ENCODE measurements at regions of chr11 and their contacts with region 1.

Region 1: DNA sequence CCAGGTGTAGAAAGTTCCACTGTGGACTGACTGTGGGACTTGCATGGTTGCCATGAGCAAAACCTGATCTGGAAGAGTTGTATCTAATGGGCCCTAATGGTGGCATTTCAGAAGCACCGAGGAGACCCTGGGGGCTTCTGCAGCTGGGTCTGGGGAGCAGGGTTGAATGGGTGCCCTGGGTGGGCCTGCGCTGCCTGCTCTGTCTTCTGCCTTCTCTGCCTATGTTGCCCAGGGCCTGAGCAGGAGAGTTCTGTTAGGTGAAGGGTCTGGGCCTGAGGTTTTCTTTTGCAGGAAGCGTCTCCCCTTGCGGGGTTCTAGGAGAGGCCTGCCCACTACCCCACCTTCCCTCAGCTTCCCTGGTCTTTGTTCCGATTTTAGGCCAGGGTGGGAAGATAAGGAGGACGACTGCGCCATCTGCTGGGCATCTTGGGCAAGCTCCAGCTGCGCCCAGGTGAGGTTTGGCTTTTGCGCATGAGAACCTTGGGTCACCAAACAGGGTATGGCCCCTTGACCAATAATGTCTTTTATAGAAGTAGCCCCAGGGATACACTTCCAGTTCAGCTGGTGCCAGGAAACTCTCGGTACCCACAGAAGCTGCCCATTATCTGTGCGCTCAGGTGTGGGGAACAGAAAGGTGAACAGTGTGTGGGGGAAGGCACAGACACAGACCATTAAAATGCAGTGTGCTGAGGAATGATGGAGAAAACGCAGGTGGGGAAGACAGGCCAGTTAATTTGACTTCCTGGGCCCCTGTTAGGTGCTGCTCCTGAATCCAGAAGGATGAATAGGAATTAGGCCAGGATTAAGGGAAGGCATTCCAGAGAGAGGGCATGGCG is 23.2 kb downstream of the COMMD9 start:
- DNase-seq: peak; percentile 29
- H3K4me3 ChIP-seq: no peak overlapping the region
- H3K27ac ChIP-seq: no peak overlapping the region
- H3K4me1 ChIP-seq: no peaks in the 10 kb centered on the region
- H3K27me3 ChIP-seq: no peaks in the 10 kb centered on the region
- CTCF ChIP-seq: peak; percentile 85 to 91

Region 2: DNA sequence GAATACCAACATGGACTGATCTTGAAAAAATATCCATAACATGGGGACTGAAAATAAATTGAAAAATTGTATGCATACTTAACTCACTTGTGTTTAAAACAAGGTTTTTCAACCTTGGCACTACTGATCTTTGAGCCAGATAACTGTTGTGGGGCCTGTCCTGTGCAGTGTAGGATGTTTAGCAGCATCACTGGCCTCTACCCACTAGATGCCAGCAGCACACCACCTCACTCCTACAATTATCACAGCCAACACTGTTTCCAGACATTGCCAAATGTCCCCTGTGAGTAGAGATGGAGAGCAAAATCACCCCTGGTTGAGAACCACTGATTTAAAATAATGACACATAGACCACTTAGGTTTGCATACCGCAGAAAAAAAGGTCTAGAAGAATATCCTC is 801.7 kb before region 1 on chr11:
- CTCF ChIA-PET with region 1: no interaction called
- dilution Hi-C with region 1: no loop called
- in situ Hi-C with region 1: no loop called
- intact Hi-C with region 1: loop called (anchors 5 kb)
- DNase-seq: peak; percentile 12
- H3K4me3 ChIP-seq: no peak overlapping the region
- H3K27ac ChIP-seq: no peak overlapping the region
- H3K4me1 ChIP-seq: no peaks in the 10 kb centered on the region
- H3K27me3 ChIP-seq: no peaks in the 10 kb centered on the region
- CTCF ChIP-seq: peak in 1 of 2 donors; percentile 47

Region 3: DNA sequence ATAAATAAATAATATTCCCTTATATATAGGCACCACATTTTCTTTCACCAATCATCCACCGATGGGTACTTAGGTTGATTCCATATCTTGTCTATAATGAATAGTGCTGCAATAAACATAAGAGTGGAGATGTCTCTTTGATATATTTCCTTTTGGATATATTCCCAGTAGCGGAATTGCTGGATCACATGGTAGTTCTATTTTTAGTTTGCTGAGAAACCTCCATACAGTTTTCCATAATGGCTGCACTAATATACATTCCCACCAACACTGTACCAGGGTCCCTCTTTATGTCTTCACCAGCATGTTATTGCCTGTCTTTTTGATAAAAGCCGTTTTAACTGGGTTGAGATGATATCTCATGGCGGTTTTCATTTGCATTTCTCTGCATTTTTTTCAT is 764.2 kb before region 1 on chr11:
- CTCF ChIA-PET with region 1: no interaction called
- dilution Hi-C with region 1: no loop called
- in situ Hi-C with region 1: loop called (anchors 25 kb)
- intact Hi-C with region 1: loop called (anchors 5 kb)
- DNase-seq: no peak
- H3K4me3 ChIP-seq: no peak overlapping the region
- H3K27ac ChIP-seq: no peak overlapping the region
- H3K4me1 ChIP-seq: no peaks in the 10 kb centered on the region
- H3K27me3 ChIP-seq: no peaks in the 10 kb centered on the region
- CTCF ChIP-seq: no peak

Region 4: DNA sequence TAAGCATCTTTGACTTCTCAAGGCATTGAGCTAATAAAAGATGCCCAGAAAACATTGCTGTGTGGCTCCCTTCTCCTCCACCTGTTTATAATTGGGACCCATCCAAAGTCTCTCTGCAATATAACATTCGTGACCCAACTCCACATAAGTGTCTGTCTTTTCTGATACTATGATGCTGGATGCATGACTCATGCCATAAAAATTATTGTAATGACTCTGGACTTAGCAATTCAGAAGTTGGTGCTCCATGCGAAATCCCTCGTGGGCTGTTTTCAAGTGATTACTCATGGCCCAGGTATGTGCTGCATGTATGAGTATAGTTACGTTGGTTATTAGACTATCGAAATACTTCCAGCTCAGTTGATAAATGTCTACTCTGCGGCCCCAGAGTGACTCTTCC is 636.1 kb before region 1 on chr11:
- CTCF ChIA-PET with region 1: no interaction called
- dilution Hi-C with region 1: loop called (anchors 25 kb)
- in situ Hi-C with region 1: no loop called
- intact Hi-C with region 1: no loop called
- DNase-seq: peak; percentile 97
- H3K4me3 ChIP-seq: no peak overlapping the region
- H3K27ac ChIP-seq: peak overlapping the region; percentile 53
- H3K4me1 ChIP-seq: peaks cover 17% of the 10 kb centered on the region
- H3K27me3 ChIP-seq: no peaks in the 10 kb centered on the region
- CTCF ChIP-seq: no peak

Region 5: GRCh38 chr11:35815556-35816315 is 450.3 kb before region 1 on chr11:
- CTCF ChIA-PET with region 1: no interaction called
- dilution Hi-C with region 1: no loop called
- in situ Hi-C with region 1: loop called (anchors 10 kb)
- intact Hi-C with region 1: no loop called
- DNase-seq: no peak
- H3K4me3 ChIP-seq: no peak overlapping the region
- H3K27ac ChIP-seq: no peak overlapping the region
- H3K4me1 ChIP-seq: peaks cover 9% of the 10 kb centered on the region
- H3K27me3 ChIP-seq: no peaks in the 10 kb centered on the region
- CTCF ChIP-seq: no peak

Region 6: DNA sequence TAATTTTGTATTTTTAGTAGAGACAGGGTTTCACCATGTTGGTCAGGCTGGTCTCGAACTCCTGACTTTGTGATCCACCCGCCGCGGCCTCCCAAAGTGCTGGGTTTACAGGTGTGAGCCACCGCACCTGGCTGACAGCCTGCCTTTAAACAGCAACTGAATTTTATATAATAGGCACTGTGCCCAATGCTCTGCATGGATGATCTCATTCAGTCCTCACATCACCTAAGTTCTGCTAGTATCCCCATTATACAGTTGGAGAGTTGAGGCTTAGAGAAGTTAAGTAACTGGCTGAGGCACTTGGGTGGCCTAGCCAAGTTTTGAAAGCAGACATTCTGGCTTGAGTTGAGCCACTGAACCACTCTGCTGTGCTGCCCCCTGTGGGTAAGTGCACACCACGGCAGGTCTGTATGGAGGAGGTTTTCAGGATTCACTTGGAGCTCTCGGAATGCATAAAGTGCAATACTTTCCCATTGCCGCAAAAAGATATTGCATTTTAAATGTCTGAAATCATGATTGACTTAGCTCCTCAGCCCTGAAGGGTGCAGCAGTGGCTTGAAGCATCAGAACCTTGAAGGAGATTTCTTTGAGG is 209.8 kb before region 1 on chr11:
- CTCF ChIA-PET with region 1: no interaction called
- dilution Hi-C with region 1: no loop called
- in situ Hi-C with region 1: loop called in 1 of 2 experiments (anchors 25 kb)
- intact Hi-C with region 1: no loop called
- DNase-seq: peak; percentile 24
- H3K4me3 ChIP-seq: no peak overlapping the region
- H3K27ac ChIP-seq: no peak overlapping the region
- H3K4me1 ChIP-seq: no peaks in the 10 kb centered on the region
- H3K27me3 ChIP-seq: no peaks in the 10 kb centered on the region
- CTCF ChIP-seq: peak; percentile 64 to 78

Region 7: DNA sequence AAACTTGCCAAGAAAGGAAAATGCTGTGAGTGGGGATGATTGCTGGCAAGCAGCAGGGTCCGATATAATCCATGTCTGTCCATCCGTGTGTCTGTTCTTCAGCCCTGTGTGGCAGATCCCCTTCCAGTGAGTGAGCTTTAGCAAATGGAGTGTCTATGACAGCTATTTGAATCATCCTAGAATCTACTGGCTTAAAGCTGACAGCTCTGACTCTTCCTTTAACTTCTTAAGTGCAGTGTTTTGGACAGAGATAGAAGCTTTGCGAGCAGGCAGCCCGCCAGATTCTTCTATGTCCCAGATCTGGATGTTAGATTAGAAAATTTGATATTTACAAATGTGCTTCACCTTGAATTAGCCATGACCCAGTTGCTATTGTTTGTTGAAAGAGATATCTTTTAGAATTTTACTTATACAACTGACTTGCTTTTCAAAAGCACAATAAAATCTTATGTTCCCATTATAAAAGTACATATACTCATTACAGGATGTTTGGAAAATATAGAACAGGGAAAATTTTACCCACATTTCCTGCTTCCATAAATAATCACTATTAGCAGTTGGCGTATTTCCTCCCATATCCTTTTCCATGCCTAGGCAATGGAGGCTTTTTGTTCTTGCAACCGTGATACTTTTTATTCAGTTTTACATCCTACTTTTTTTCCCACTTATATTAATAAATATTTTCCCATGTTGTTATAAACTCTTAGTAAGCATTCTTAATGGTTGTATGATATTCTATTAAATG is 101.3 kb before region 1 on chr11:
- CTCF ChIA-PET with region 1: no interaction called
- dilution Hi-C with region 1: no loop called
- in situ Hi-C with region 1: no loop called
- intact Hi-C with region 1: no loop called
- DNase-seq: no peak
- H3K4me3 ChIP-seq: no peak overlapping the region
- H3K27ac ChIP-seq: no peak overlapping the region
- H3K4me1 ChIP-seq: no peaks in the 10 kb centered on the region
- H3K27me3 ChIP-seq: no peaks in the 10 kb centered on the region
- CTCF ChIP-seq: no peak